PC-9 (cell line): ENCODE measurements at regions of chr3 and their contacts with region 1.

Region 1: GRCh38 chr3:171829841-171830517 is 13.2 kb upstream of the TMEM212 start:
- DNase-seq: peak; percentile 54 to 77
- H3K4me3 ChIP-seq: no peak overlapping the region
- H3K27ac ChIP-seq: no peak overlapping the region
- H3K4me1 ChIP-seq: peaks cover 26% of the 10 kb centered on the region
- H3K27me3 ChIP-seq: no peaks in the 10 kb centered on the region
- CTCF ChIP-seq: peak; percentile 77

Region 2: GRCh38 chr3:171157286-171157685 is 672.7 kb before region 1 on chr3:
- CTCF ChIA-PET with region 1: no interaction called
- POLR2A ChIA-PET with region 1: no interaction called
- intact Hi-C with region 1: loop called (anchors 5 kb)
- DNase-seq: peak in 1 of 2 experiments; percentile 77
- H3K4me3 ChIP-seq: peak overlapping the region; percentile 17; the same call in 1 of the 2 replicates
- H3K27ac ChIP-seq: peak overlapping the region; percentile 93
- H3K4me1 ChIP-seq: peaks cover 53% of the 10 kb centered on the region
- H3K27me3 ChIP-seq: no peaks in the 10 kb centered on the region
- CTCF ChIP-seq: peak; percentile 43; the same call in 1 of the 2 replicates

Region 3: DNA sequence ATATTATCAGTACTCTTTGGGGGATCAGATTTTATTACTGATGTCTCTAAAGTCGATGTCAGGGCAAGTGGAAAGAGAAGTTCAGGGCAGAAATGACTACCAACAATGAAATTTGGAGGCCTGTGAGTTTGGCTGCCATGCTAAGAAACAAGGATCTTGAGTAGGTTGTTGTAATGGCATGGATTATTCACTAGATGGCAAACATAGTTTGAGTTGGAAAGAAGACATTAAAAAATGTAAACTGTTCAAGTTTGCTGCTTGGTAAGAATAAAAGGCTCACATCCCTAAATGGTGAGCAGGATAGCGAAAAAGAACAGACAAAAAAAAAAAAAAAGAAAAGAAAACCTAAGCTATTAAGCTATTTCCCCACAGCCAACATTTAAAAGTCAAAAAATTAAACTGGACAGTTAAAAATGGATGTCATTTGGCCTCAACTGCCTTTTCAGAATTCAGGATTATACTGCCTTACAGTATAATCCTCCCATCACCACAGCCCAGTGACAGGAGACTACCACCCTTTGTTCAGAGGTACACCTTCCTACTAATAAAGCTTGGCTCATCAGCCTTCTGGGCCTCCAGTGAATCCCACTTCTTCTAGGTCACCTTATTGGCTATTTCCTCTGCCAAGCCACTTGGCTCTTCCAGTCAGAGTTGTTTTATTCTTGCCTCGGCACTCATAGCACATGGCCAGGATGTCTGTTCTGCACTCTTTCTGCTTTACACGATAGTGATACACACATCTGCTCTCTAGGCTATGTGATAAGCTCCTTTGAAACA is 183.4 kb before region 1 on chr3:
- CTCF ChIA-PET with region 1: interaction called, 14 read pairs
- POLR2A ChIA-PET with region 1: no interaction called
- intact Hi-C with region 1: loop called (anchors 1 kb)
- DNase-seq: peak in 1 of 2 experiments; percentile 51
- H3K4me3 ChIP-seq: no peak overlapping the region
- H3K27ac ChIP-seq: no peak overlapping the region
- H3K4me1 ChIP-seq: no peaks in the 10 kb centered on the region
- H3K27me3 ChIP-seq: no peaks in the 10 kb centered on the region
- CTCF ChIP-seq: peak; percentile 90

Region 4: DNA sequence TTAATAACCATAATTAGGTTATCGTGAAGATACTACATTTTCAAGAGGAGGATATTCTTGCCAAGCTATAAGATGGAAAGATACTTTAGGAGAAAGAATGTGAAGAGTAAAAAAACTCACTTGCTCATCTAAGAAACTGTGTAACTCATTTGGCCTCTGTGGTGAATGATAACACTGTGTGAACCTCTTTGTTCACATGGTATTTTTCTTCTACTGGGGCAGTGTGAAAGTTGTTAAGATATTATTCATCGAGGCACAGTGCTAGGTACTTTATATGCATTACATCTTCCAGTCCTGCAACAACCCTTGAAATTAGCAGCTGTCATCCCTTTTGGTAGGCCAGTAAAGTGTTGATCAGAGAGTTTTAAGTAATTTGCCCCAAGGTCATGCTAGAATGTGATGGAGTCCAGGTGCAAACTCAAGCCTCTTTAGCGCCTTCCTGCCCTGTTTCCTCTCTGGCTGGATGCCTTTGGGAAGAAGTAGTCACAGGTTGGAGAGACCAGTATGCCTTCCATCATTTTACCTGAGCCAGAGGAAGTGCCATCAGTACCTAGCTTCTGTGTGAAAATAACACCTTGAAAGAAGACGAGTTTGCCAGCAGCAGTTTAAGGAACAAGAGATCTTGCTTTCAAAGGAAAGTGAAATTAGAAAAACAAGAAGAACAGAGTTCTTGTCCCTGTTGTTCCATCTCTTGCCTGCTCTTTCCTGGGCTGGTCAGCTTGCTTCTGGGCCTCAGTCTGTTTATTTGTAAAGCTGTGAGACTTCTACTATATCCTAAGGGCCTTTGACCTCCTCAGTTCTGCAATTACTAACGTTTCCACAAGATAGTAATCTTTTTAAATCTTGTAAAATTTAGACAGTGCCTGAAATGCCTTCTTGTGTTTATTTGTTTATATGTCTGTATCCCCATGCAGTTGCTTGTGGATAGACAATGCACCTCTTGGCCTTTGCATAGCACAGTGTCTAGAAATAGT is 388.7 kb after region 1 on chr3:
- CTCF ChIA-PET with region 1: interaction called, 13 read pairs
- POLR2A ChIA-PET with region 1: no interaction called
- intact Hi-C with region 1: no loop called
- DNase-seq: peak in 1 of 2 experiments; percentile 65
- H3K4me3 ChIP-seq: no peak overlapping the region
- H3K27ac ChIP-seq: peak overlapping the region; percentile 45
- H3K4me1 ChIP-seq: peaks cover 73% of the 10 kb centered on the region
- H3K27me3 ChIP-seq: no peaks in the 10 kb centered on the region
- CTCF ChIP-seq: no peak